ENCODE measurements at regions of chr9 and their contacts with region 1.

Region 1: DNA sequence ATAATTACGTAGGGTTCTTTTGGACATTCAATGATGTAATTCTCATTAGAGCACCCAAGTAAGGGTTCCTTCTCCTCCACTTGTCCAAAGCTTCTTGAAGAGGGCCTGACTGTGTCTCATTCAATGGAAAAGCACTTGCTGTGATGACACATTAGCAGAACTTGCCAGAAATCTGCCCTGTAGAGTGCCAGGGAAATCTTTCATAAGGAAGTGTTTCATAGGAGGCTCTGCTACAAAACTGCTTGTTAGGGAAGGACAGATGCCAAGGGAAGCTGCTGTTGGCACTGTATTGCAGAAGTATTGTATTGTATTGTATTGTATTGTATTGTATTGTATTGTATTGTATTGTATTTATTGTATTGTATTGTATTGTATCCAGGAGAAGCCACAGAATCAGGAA is 45.5 kb upstream of the MPDZ start:
- DNase-seq: no peak
- H3K4me3 ChIP-seq: no peak overlapping the region
- H3K4me1 ChIP-seq: no peaks in the 10 kb centered on the region
- H3K27me3 ChIP-seq: no peaks in the 10 kb centered on the region

Region 2: DNA sequence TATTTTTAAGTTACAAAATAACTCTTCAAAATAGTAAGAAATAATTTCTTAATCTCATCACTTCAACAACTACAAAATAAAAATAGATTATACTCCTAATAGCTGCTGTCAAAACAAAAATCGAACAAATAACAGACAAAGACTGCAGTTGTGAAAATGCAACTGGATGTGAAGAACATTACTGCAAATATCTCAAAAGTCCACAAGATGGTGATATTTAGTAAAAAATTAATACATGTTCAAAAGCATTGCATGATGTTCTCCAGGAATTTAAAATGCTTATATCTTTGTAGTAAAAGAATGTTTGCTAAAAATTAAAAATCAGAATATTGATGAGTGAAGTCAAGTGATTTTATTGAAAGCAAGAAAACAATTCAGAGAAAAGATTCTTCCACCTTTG is 111.7 kb before region 1 on chr9:
- in situ Hi-C with region 1: loop called (anchors 25 kb)
- DNase-seq: peak in 1 of 2 experiments; percentile 57
- H3K4me3 ChIP-seq: no peak overlapping the region
- H3K4me1 ChIP-seq: peaks cover 5% of the 10 kb centered on the region; the same call in 1 of the 2 replicates
- H3K27me3 ChIP-seq: no peaks in the 10 kb centered on the region

Region 3: GRCh38 chr9:13688994-13689600 is 364.1 kb after region 1 on chr9:
- in situ Hi-C with region 1: no loop called
- DNase-seq: peak; percentile 49 to 51
- H3K4me3 ChIP-seq: no peak overlapping the region
- H3K4me1 ChIP-seq: peaks cover 4% of the 10 kb centered on the region; the same call in 1 of the 2 replicates
- H3K27me3 ChIP-seq: no peaks in the 10 kb centered on the region